Panc1 (cell line): ENCODE measurements at regions of chr11 and their contacts with region 1.

Region 1: DNA sequence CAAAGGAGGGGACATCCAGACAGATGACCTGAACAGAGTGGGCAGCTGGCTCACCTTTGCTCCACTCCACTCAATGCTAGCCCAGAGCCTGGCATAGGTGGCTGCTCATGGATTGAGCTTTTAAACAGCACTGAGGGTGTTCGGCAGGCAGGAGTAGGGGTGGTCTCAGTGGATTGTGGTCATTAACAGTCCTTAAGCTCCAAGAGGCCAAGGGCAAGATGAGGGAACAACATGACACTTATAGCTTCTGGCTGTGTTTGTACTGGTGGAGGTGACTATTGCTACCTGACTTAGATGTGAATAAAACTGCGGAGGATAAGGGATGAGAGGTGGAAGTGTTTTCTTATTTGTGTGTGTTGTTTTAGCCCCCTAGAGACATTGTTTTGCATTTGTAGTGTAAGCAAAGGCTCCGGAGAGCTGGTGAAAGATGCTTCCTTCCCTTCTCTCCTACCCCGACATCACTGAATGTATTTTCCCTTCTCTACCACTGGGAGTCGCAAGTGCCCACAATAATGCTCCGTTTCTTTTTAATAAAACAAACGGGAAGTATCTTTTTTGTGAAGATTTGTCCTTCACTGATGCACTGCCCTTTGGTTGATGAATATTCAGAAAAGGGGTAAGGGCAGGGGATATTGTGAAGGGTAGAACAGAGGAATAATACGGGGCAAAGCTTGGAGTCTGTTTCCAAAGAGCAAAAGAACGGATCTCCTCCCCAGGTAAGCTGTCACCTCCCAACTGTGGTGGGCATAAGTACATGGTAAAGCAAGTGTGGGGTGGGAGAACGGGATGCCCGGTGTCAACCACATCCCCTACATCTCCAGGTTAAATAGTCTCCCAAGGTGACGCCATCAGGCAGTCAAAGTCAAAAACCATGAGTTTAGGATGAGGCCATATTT is 27.5 kb upstream of the MTNR1B start:
- DNase-seq: peak; percentile 25
- ATAC-seq: peak; percentile 68; the same call in 1 of the 2 replicates
- H3K4me3 ChIP-seq: no peak overlapping the region
- H3K27ac ChIP-seq: no peak overlapping the region
- H3K4me1 ChIP-seq: no peaks in the 10 kb centered on the region
- H3K27me3 ChIP-seq: no peaks in the 10 kb centered on the region
- CTCF ChIP-seq: peak; percentile 82

Region 2: DNA sequence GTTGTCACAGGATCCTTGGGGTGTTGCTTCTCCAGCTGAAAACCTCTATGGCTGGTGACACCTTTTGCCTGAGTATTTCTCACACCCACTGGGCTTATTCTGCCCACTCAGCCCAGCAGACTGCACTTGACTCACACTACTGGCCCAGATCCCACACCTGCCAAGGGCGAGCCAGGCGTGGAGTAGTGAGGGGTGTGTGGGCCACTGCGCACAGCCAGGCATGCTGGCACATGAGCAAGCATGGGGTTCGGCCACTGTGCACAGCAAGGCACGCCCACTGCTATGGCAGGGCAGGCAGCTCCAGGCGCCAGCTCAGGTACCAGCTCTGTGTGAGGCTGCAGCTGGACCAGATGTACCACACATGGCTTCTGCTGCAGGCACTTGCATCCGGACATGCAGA is 89.0 kb before region 1 on chr11:
- CTCF ChIA-PET with region 1: no interaction called
- POLR2A ChIA-PET with region 1: no interaction called
- in situ Hi-C with region 1: no loop called
- intact Hi-C with region 1: no loop called
- DNase-seq: no peak
- ATAC-seq: no peak
- H3K4me3 ChIP-seq: no peak overlapping the region
- H3K27ac ChIP-seq: no peak overlapping the region
- H3K4me1 ChIP-seq: no peaks in the 10 kb centered on the region
- H3K27me3 ChIP-seq: no peaks in the 10 kb centered on the region
- CTCF ChIP-seq: no peak

Region 3: GRCh38 chr11:93225662-93226061 is 283.7 kb after region 1 on chr11:
- CTCF ChIA-PET with region 1: no interaction called
- POLR2A ChIA-PET with region 1: no interaction called
- in situ Hi-C with region 1: no loop called
- intact Hi-C with region 1: loop called (anchors 2 kb)
- DNase-seq: no peak
- ATAC-seq: no peak; the same call in 1 of the 2 replicates
- H3K4me3 ChIP-seq: no peak overlapping the region
- H3K27ac ChIP-seq: no peak overlapping the region
- H3K4me1 ChIP-seq: no peaks in the 10 kb centered on the region
- H3K27me3 ChIP-seq: peaks cover 9% of the 10 kb centered on the region
- CTCF ChIP-seq: peak; percentile 64